ENCODE measurements at regions of chr7 and their contacts with region 1.

Region 1: GRCh38 chr7:142853739-142854371 is 1.0 kb upstream of the EPHB6 start:
- DNase-seq: peak; percentile 78
- ATAC-seq: peak; percentile 83

Region 2: DNA sequence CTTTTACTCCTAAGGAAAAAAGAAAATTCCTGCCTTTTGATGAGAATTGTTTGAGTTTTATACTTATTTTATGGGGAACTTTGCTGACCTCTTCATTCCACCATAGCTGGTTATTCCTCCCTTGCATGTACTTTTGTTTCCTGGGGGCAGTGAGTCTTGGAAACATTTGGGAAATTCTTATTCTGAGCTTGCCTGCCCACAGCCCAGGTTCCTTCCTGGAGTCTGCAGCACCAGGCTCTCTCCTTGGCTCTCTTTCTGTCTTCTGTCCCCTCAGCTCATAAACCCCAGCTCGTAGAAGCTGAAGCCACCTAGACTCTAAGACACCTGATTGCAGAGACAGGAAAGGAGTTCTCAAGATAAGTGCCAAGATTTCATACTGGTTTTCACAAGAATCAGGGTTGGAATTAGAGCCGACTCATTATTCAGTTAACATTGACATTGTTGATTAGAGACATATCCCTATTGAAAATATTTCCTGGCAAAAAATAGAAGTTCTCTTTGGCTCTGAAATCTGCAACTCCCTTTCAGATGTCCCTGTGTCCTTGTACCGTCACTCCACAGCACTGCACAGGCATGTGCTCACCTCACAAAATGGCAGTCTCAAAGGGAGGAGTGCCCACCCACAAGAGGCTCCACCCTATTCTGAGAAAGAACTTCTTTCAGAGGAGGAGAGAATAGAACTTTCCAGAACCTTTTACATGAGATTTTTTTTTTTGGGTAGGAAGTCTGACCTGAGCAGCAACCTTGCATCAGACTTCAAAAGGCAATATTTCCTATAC is 172.4 kb before region 1 on chr7:
- intact Hi-C with region 1: no loop called
- DNase-seq: no peak
- ATAC-seq: no peak

Region 3: GRCh38 chr7:143214789-143215679 is 361.2 kb after region 1 on chr7:
- intact Hi-C with region 1: loop called (anchors 10 kb)
- DNase-seq: no peak
- ATAC-seq: peak; percentile 87